ENCODE measurements at regions of chr2 and their contacts with region 1.

Region 1: DNA sequence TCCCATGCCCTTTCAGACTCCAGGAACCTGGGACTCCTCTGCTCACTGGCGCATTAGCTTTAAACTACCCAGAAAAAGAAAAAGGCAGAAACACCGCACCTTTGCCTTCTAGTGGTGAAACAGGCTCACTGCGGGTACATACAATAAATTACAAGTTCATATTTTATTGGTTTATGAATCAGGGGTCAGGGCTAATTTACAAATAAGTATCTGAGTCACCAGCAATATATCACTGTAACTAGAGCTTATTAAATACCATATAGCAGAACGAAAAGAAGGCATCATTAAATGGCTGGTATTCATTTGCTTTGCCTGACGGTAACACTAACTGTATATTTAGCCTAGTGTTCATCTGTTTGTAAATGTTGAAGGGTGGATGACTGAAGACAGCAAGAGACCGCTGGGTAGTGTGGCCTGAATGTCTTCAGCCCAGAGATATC is 26.9 kb upstream of the DTNB start:
- DNase-seq: peak; percentile 70
- H3K4me3 Mint-ChIP-seq: no peak overlapping the region
- H3K27ac Mint-ChIP-seq: no peak overlapping the region
- H3K4me1 Mint-ChIP-seq: peaks cover 6% of the 10 kb centered on the region
- H3K27me3 Mint-ChIP-seq: no peaks in the 10 kb centered on the region
- CTCF ChIP-seq: peak; percentile 62

Region 2: DNA sequence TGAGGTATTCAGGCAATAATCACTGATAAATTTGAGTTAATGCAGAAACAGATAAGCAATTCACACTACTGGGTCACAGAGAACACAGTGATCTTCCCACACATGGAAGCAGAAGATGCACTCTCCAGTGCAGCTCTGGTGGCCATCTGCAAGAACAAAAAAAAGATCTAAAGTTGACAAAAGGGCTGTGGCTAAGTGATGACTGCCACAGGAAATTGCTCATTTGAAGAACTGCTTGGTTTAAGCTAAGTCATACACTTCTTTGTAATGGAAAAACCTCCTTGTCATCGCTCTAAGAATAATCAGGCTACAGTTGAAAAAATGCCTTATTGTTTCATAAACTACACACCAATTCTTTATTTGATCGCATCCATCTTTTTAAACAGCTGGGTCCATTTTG is 142.0 kb before region 1 on chr2:
- CTCF ChIA-PET with region 1: no interaction called
- POLR2A ChIA-PET with region 1: no interaction called
- intact Hi-C with region 1: no loop called
- DNase-seq: no peak
- H3K4me3 Mint-ChIP-seq: no peak overlapping the region
- H3K27ac Mint-ChIP-seq: no peak overlapping the region
- H3K4me1 Mint-ChIP-seq: no peaks in the 10 kb centered on the region
- H3K27me3 Mint-ChIP-seq: no peaks in the 10 kb centered on the region
- CTCF ChIP-seq: no peak

Region 3: DNA sequence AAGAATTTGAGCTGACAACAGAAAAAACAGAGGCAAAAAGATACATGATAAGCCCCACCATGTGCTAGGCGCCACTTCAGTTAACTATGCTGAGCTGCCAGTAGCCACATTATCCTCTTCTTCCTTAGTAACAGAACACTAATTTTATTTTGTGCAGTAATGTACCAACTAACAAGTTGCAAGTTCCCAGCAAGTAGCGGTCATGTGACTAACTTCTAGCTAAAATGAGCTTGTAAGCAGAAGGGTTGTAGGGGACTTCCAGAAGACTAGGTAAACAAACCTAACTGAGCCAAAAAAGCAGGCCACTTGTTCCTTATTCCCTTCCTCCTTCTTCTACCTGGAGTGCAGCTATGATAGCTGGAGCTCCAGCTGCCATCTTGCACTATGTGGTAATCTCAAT is 102.4 kb before region 1 on chr2:
- CTCF ChIA-PET with region 1: interaction called, 18 read pairs
- POLR2A ChIA-PET with region 1: no interaction called
- intact Hi-C with region 1: no loop called
- DNase-seq: no peak
- H3K4me3 Mint-ChIP-seq: no peak overlapping the region
- H3K27ac Mint-ChIP-seq: no peak overlapping the region
- H3K4me1 Mint-ChIP-seq: no peaks in the 10 kb centered on the region
- H3K27me3 Mint-ChIP-seq: no peaks in the 10 kb centered on the region
- CTCF ChIP-seq: no peak

Region 4: GRCh38 chr2:25618642-25619037 is 81.6 kb before region 1 on chr2:
- CTCF ChIA-PET with region 1: interaction called, 23 read pairs
- POLR2A ChIA-PET with region 1: interaction called, 3 read pairs
- intact Hi-C with region 1: no loop called
- DNase-seq: peak; percentile 87
- H3K4me3 Mint-ChIP-seq: peak overlapping the region; percentile 61
- H3K27ac Mint-ChIP-seq: peak overlapping the region; percentile 85
- H3K4me1 Mint-ChIP-seq: peaks cover 42% of the 10 kb centered on the region
- H3K27me3 Mint-ChIP-seq: no peaks in the 10 kb centered on the region
- CTCF ChIP-seq: no peak

Region 5: GRCh38 chr2:25673300-25674076 is 26.8 kb before region 1 on chr2 and contains the start of gene DTNB:
- CTCF ChIA-PET with region 1: interaction called, 10 read pairs
- POLR2A ChIA-PET with region 1: interaction called, 10 read pairs
- intact Hi-C with region 1: loop called (anchors 1 kb)
- DNase-seq: peak; percentile 80
- H3K4me3 Mint-ChIP-seq: peak within 1 kb of the TSS; percentile 72
- H3K27ac Mint-ChIP-seq: no peak within 1 kb of the TSS
- H3K4me1 Mint-ChIP-seq: peaks cover 8% of the 10 kb centered on the region
- H3K27me3 Mint-ChIP-seq: no peaks in the 10 kb centered on the region
- CTCF ChIP-seq: no peak
- total RNA-seq, gene DTNB: 22.7 and 26.3 TPM in 2 replicates

Region 6: DNA sequence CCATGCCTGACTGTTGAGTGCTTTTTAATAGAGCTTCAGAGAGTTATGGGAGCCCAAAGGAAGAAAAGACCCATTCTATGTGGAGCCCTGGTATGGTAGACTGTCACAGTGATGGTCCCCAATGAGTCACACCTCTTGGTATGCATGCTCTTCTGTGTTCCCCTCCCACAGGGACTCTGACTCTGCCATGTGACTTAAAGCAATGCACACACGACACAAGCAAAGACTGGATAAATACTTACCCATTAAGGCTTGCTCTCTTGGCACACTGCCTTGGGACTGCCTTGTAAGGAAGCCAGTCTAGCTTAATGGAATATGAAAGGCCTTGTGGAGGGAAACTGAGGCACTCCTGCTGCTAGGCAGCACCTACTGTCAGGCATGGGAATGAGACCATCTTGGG is 10.2 kb before region 1 on chr2:
- CTCF ChIA-PET with region 1: interaction called, 40 read pairs
- POLR2A ChIA-PET with region 1: interaction called, 11 read pairs
- intact Hi-C with region 1: no loop called
- DNase-seq: no peak
- H3K4me3 Mint-ChIP-seq: no peak overlapping the region
- H3K27ac Mint-ChIP-seq: no peak overlapping the region
- H3K4me1 Mint-ChIP-seq: peaks cover 5% of the 10 kb centered on the region
- H3K27me3 Mint-ChIP-seq: no peaks in the 10 kb centered on the region
- CTCF ChIP-seq: no peak

Region 7: GRCh38 chr2:25720575-25720974 is 20.3 kb after region 1 on chr2:
- CTCF ChIA-PET with region 1: interaction called, 10 read pairs
- POLR2A ChIA-PET with region 1: interaction called, 5 read pairs
- intact Hi-C with region 1: no loop called
- DNase-seq: no peak
- H3K4me3 Mint-ChIP-seq: no peak overlapping the region
- H3K27ac Mint-ChIP-seq: no peak overlapping the region
- H3K4me1 Mint-ChIP-seq: peaks cover 12% of the 10 kb centered on the region
- H3K27me3 Mint-ChIP-seq: peaks cover 13% of the 10 kb centered on the region
- CTCF ChIP-seq: no peak

Measured in MCF 10A (cell line).